ENCODE measurements at regions of chr20 and their contacts with region 1.

Region 1: GRCh38 chr20:32079655-32080109 is 27.6 kb downstream of the HCK start:
- DNase-seq: no peak
- ATAC-seq: no peak
- H3K4me3 ChIP-seq: no peak overlapping the region
- H3K27ac ChIP-seq: peak overlapping the region in 1 of 2 donors; percentile 15
- H3K4me1 ChIP-seq: peaks cover 0 to 49% of the 10 kb centered on the region in 2 donors
- H3K27me3 ChIP-seq: peaks cover 0 to 7% of the 10 kb centered on the region in 2 donors
- CTCF ChIP-seq: no peak

Region 2: DNA sequence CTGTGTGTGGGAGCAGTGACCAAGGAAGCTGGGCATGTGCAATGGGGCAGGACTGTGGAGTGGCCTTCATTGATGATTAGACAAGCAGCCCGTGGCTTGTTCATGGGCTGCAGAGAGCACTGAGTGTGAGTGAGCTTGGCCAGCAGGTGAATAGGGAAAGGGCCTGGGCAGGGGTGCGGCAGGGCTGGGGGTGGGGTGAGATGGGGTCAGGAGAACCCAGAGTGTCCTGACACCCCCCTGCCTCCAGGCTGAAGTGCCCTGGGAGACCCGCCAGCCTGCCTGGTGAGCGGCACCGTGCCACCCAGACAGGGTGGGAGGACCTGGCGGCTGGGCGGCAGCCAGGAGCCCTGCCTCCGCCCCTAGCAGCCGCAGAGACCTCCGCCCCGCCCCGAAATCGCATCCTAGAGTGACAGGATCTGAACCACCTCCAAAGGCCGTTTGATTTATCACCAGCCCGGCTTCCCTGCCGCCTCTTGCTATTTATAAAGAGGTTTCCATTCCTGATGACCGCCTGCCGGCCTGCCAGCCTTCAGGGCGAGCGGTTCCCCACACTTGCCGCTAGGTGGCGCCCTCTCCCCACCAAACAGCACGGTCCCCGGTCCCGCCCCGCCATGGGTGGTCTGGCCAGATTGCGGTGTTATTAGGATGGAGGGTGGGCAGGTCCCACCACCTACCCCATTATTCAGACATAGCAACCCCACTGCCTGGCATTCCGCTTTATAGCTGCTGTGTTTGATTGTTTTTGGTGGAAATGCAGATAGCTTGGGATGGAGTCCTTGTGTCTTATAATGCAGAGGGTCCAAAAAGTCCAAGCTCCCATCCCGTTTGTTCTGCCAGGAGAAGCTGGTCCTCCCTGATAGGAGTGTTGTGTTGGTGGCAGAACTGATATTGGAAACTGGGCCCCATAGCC is 257.0 kb before region 1 on chr20:
- intact Hi-C with region 1: loop called in 1 of 2 experiments (anchors 10 kb)
- DNase-seq: peak; percentile 72 to 95 (median 86)
- ATAC-seq: peak; percentile 89
- H3K4me3 ChIP-seq: no peak overlapping the region
- H3K27ac ChIP-seq: no peak overlapping the region
- H3K4me1 ChIP-seq: peaks cover 0 to 7% of the 10 kb centered on the region in 2 donors
- H3K27me3 ChIP-seq: no peaks in the 10 kb centered on the region
- CTCF ChIP-seq: peak; percentile 97 to 100

Region 3: GRCh38 chr20:31974951-31975487 is 104.7 kb before region 1 on chr20:
- intact Hi-C with region 1: no loop called
- DNase-seq: no peak
- ATAC-seq: no peak
- H3K4me3 ChIP-seq: no peak overlapping the region
- H3K27ac ChIP-seq: no peak overlapping the region
- H3K4me1 ChIP-seq: no peaks in the 10 kb centered on the region
- H3K27me3 ChIP-seq: peaks cover 0 to 19% of the 10 kb centered on the region in 2 donors
- CTCF ChIP-seq: no peak